Activated CD4-positive, alpha-beta T cell treated with anti-CD3 and anti-CD28 coated beads for 36 hours (primary cell): ENCODE measurements at regions of chrX and their contacts with region 1.

Region 1: GRCh38 chrX:55717521-55718497 is at the start of gene RRAGB:
- DNase-seq: peak; percentile 93
- ATAC-seq: peak; percentile 99
- H3K4me3 Mint-ChIP-seq: peak within 1 kb of the TSS; percentile 87
- H3K27ac Mint-ChIP-seq: peak within 1 kb of the TSS; percentile 87
- H3K4me1 Mint-ChIP-seq: peaks cover 33% of the 10 kb centered on the region
- H3K27me3 Mint-ChIP-seq: no peaks in the 10 kb centered on the region
- total RNA-seq, gene RRAGB: 4.3 to 5.0 TPM

Region 2: DNA sequence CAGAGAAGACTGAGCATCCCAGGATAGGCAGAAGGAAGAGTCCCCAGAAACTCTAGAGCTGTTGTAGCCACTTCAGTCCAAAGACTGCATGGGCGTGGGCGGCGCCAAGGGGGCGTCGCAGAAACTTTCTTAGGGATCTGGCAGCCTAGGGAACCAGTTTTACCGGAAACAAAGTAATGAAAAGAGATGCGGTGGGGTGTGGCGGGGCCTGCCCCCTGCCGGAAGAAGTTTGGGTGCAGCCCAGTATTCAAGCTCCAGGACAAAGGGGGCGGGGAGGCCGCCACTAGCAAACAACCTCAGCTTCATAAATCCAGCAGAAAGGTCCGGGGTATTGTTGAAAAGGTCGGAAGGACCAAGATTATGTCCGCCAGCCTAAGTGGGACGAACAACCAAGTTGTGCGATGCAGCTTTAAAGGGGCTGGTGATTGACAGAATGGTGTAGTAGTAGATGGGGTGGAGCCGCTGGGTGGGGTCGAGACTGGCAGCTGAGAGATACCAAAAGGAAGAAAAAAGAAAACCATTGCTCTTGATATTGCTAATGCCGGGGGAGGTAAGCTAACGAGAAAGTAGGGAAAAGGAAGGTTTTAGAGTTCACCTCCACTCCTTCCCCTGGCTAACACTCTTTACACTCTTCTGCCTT is 190.3 kb after region 1 on chrX:
- CTCF ChIA-PET with region 1: interaction called, 9 read pairs
- POLR2A ChIA-PET with region 1: no interaction called
- intact Hi-C with region 1: loop called (anchors 1 to 2 kb)
- DNase-seq: peak; percentile 71
- ATAC-seq: peak; percentile 75
- H3K4me3 Mint-ChIP-seq: peak overlapping the region; percentile 79
- H3K27ac Mint-ChIP-seq: peak overlapping the region; percentile 90
- H3K4me1 Mint-ChIP-seq: peaks cover 17% of the 10 kb centered on the region
- H3K27me3 Mint-ChIP-seq: no peaks in the 10 kb centered on the region

Region 3: GRCh38 chrX:56232221-56233082 is 514.6 kb after region 1 on chrX and contains the start of gene KLF8:
- CTCF ChIA-PET with region 1: no interaction called
- POLR2A ChIA-PET with region 1: no interaction called
- intact Hi-C with region 1: loop called in 1 of 2 experiments (anchors 5 kb)
- DNase-seq: peak; percentile 70
- ATAC-seq: peak; percentile 84
- H3K4me3 Mint-ChIP-seq: peak within 1 kb of the TSS; percentile 70
- H3K27ac Mint-ChIP-seq: peak within 1 kb of the TSS; percentile 60
- H3K4me1 Mint-ChIP-seq: peaks cover 20% of the 10 kb centered on the region
- H3K27me3 Mint-ChIP-seq: no peaks in the 10 kb centered on the region
- total RNA-seq, gene KLF8: 4.9 to 5.4 TPM